Aorta (tissue), 5 donors: ENCODE measurements at regions of chr17 and their contacts with region 1.

Region 1: DNA sequence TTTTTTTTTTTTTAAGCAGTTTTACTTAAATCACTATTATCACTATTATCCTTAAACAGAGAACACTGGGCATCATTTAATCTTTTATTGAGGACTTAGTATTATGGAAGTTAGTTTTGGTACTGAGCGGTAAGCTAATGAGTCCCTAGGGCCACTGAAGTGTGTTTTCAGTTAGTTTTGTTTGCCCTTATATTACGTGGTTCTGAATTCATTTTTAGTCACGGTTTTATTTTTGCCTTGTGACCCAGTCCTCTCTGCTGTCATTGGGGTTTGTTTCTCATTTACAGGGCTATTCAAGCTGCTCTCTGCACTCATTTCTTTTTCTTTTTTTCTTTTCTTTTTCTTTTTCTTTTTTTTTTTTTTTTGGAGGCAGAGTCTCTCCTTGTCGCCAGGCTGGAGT is 17.3 kb downstream of the RABEP1 start:
- DNase-seq: no peak
- ATAC-seq: no peak
- H3K4me3 ChIP-seq: no peak overlapping the region
- H3K27ac ChIP-seq: no peak overlapping the region
- H3K4me1 ChIP-seq: peaks cover 0 to 1% of the 10 kb centered on the region in 2 donors
- H3K27me3 ChIP-seq: no peaks in the 10 kb centered on the region

Region 2: GRCh38 chr17:5219551-5219950 is 79.8 kb before region 1 on chr17:
- intact Hi-C with region 1: no loop called
- DNase-seq: peak in 1 of 2 donors; percentile 2
- ATAC-seq: no peak
- H3K4me3 ChIP-seq: no peak overlapping the region
- H3K27ac ChIP-seq: no peak overlapping the region
- H3K4me1 ChIP-seq: no peaks in the 10 kb centered on the region
- H3K27me3 ChIP-seq: no peaks in the 10 kb centered on the region

Region 3: DNA sequence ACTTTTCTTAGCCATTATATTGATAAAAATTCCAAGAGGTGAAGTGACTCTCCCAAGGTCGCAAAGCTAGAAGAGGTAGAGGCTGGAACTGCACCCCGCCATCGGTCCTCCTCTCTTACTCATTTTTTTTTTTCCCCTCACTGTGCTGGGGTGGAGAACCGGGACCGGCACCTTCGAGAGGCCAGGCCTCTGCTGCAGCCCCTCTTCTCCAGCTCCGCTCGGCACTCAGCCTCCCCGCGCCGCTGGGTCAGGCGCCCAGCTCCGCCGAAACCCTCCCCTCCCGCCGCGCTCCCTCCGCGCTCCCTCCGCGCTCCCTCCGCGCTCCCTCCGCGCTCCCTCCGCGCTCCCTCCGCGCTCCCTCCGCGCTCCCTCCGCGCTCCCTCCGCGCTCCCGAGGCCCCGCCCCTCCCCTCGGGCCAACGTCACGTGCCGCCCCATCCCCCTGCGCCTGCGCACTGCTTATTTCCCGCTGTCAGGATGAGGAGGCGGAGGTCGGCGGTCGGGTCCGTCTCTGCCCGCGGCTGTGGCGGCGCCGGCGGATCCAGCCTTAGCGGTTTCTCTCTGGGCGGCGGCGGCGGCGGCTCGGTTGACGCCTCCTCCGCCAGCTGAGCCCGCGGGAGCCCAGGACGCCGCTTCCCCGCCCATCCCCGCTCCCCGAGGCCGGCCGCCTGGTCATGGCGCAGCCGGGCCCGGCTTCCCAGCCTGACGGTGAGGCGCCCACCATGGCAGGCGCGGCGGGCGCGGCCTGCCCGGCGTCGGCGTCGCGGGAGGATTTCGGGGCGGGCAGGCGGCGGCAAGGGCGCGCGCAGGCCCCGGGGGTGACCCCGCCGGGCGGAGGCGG is 17.3 kb before region 1 on chr17 and contains the start of gene RABEP1:
- intact Hi-C with region 1: loop called in 1 of 2 experiments (anchors 2 kb)
- DNase-seq: peak; percentile 95 to 98
- ATAC-seq: peak; percentile 97
- H3K4me3 ChIP-seq: peak within 1 kb of the TSS; percentile 89 to 100
- H3K27ac ChIP-seq: peak within 1 kb of the TSS in 1 of 2 donors; percentile 69
- H3K4me1 ChIP-seq: peaks cover 2 to 6% of the 10 kb centered on the region in 2 donors
- H3K27me3 ChIP-seq: no peaks in the 10 kb centered on the region
- total RNA-seq, gene RABEP1: 42.3 to 47.5 TPM

Region 4: DNA sequence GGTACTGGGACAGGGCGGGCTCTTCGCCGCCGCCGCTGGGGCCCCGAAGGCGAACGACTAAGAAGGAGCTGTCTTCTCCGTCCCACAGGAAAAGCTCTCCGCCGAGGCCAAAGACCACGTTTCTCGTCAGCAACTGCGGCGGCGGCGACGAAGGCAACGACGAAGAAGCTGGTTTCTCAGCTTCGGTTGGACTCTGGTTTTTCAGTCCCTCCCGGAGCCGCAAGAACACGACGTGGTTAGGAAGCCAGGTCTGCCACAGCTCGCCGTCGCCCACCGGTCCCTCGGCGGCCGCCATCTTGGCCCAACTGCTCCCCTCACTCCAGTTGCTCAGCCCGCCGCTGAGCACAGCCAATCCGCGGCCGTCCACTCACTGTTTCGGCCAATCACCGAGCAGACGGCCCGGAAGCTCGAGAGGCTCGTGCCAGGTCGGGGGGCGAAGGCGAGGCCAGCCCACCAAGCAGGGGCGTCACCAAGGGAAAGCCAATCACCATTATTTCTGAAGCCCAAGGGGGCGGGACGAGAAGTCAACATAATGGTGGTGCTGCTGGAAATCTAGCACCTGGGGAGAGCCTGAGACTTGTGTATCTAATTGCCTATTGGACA is 120.1 kb after region 1 on chr17 and contains the start of gene NUP88:
- intact Hi-C with region 1: no loop called
- DNase-seq: peak; percentile 98 to 99
- ATAC-seq: peak; percentile 99
- H3K4me3 ChIP-seq: peak within 1 kb of the TSS; percentile 31 to 83
- H3K27ac ChIP-seq: peak within 1 kb of the TSS in 1 of 2 donors; percentile 46
- H3K4me1 ChIP-seq: peaks cover 0 to 4% of the 10 kb centered on the region in 2 donors
- H3K27me3 ChIP-seq: no peaks in the 10 kb centered on the region
- total RNA-seq, gene NUP88: 43.2 to 56.5 TPM